GM10248 (cell line): ENCODE measurements at regions of chr1 and their contacts with region 1.

Region 1: GRCh38 chr1:109532365-109533136 is 7.1 kb upstream of the GPR61 start:
- DNase-seq: peak; percentile 89
- CTCF ChIP-seq: peak; percentile 94

Region 2: GRCh38 chr1:109193653-109194590 is 338.6 kb before region 1 on chr1:
- CTCF ChIA-PET with region 1: interaction called, 11 read pairs
- POLR2A ChIA-PET with region 1: no interaction called
- DNase-seq: peak; percentile 78
- CTCF ChIP-seq: peak; percentile 76

Region 3: GRCh38 chr1:109263597-109264398 is 268.8 kb before region 1 on chr1:
- CTCF ChIA-PET with region 1: interaction called, 76 read pairs
- POLR2A ChIA-PET with region 1: no interaction called
- DNase-seq: peak; percentile 85
- CTCF ChIP-seq: peak; percentile 89

Region 4: GRCh38 chr1:109404838-109405237 is 127.7 kb before region 1 on chr1:
- CTCF ChIA-PET with region 1: interaction called, 45 read pairs
- POLR2A ChIA-PET with region 1: no interaction called
- DNase-seq: no peak
- CTCF ChIP-seq: no peak

Region 5: DNA sequence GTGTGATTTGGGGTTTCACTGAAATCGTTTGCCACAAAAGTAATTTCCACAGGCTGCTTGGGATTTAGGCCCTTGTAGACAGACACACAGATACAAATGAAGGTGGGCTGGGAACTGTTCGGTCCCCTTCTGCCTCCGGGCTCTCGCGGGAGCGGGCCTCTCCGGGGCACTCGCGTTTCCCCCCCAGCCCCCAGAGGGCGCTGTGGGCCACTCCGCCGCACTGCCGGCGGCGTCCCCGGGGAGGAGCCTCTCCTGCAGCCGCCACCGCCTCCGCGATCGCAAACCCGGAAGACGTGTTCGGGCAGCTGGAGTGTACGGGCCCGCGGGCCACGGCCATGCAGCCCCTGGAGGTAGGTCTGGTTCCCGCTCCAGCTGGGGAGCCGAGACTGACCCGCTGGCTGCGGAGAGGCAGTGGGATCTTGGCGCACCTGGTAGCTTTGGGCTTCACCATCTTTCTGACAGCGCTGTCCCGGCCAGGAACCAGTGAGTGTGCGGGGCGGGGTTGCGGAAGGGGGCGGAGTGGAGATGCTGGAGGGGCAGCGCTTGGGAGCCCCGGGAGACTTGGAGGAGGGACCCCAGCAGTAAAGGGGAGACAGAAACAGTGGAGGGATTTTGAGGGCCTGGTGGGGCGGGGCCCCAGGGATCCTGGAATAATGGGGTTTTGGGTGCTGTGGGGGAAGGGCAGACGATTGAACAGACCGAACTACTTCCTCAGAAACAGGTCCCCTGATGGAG is 38.6 kb before region 1 on chr1 and contains the start of gene CYB561D1:
- CTCF ChIA-PET with region 1: interaction called, 1,898 read pairs
- POLR2A ChIA-PET with region 1: interaction called, 6 read pairs
- DNase-seq: peak; percentile 94
- CTCF ChIP-seq: peak; percentile 74

Region 6: DNA sequence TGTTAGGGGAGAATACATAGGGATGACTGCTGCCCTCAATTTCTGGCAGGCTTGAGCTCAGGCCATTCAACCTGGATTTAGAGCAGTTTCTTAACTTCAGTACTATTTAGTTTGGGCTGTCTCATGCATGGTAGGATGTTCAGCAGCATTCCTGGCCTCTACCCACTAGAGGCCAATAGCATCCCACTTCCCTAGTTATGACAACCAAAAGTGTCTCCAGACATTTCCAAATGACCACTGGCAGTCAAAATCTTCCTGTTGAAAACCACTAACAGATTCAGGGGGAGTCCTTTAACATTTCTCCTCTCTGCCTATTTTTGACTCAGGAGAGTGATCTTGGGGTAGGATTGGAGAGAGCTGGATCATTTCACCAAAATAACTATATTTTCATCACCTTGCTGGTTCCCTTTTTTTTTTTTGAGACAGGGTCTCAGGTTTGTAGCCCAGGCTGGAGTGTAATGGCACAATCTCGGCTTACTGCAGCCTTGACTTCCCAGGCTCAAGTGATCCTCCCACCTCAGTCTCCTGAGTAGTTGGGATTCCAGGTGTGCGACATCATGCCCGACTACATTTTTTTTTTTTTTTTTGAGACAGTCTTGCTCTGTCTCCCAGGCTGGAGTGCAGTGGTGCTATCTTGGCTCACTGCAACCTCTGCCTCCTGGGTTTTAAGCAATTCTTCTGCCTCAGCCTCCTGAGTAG is 78.2 kb after region 1 on chr1:
- CTCF ChIA-PET with region 1: interaction called, 10 read pairs
- POLR2A ChIA-PET with region 1: no interaction called
- DNase-seq: no peak
- CTCF ChIP-seq: no peak

Region 7: GRCh38 chr1:109773146-109773899 is 240.8 kb after region 1 on chr1:
- CTCF ChIA-PET with region 1: interaction called, 10 read pairs
- POLR2A ChIA-PET with region 1: no interaction called
- DNase-seq: peak; percentile 87
- CTCF ChIP-seq: peak; percentile 91

Region 8: DNA sequence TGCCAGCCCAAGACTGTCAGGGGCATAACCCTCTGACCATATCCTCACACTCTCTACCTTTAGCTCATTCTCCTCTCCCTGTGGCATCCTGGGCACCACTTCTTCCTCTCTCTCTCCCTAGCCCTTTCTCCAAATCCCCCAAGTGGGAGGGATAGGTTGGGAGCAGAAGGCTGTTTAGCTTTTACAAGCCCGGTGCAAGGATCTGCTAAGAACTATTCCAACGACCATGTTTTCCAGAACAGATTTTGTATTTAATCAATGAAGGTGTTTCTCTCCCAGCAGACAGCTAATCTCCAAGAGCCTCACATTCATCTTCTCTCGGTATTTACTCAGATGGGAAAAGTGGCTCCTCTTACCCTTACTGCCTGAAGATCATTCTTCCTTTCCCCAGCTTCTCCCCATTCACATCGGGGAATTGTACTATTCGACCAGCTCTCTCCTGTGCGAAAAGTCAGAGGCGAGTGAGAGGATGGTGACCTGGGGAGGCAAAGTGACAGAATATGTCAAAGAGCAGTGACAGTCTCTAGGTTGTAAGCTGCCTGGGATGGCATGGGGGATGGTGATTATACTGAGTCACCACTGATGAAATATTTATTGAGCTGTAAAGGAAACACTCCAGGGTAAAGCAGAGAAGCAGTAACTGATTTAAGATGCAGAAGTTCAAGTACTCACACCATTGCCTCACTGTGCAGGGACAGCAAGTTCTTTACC is 759.6 kb after region 1 on chr1:
- CTCF ChIA-PET with region 1: no interaction called
- POLR2A ChIA-PET with region 1: no interaction called
- DNase-seq: no peak
- CTCF ChIP-seq: no peak